Gastrocnemius medialis (tissue), 4 donors: ENCODE measurements at regions of chr21 and their contacts with region 1.

Region 1: GRCh38 chr21:38219049-38219628 is 37.7 kb upstream of the KCNJ15 start:
- DNase-seq: peak; percentile 17 to 33
- ATAC-seq: peak in 1 of 2 donors; percentile 66
- H3K4me3 ChIP-seq: no peak overlapping the region
- H3K27ac ChIP-seq: no peak overlapping the region
- H3K4me1 ChIP-seq: no peaks in the 10 kb centered on the region
- H3K27me3 ChIP-seq: no peaks in the 10 kb centered on the region
- CTCF ChIP-seq: peak; percentile 68 to 89 (median 75)
- POLR2A ChIP-seq: no peak

Region 2: DNA sequence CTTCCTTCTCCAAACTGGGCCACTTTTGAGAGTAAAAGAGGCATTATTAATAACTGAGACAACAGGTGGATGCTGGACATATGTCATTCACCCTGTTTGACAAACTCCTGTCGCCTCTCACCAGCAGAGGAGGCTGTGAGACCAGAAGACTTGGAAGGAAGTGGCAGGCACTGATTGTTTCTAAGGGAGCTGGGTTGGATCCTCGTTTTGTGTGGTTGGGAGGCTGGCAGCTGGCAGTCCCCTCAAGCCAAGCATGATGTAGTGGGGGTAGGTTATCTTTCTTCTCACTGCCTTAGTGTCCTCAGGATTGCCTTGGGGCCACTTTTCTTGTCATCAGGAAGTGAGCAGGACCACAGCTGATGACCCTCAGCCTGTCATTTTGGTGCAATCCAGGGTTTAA is 48.9 kb before region 1 on chr21:
- in situ Hi-C with region 1: no loop called
- intact Hi-C with region 1: loop called (anchors 10 kb)
- DNase-seq: no peak
- ATAC-seq: no peak
- H3K4me3 ChIP-seq: no peak overlapping the region
- H3K27ac ChIP-seq: no peak overlapping the region
- H3K4me1 ChIP-seq: no peaks in the 10 kb centered on the region
- H3K27me3 ChIP-seq: no peaks in the 10 kb centered on the region
- CTCF ChIP-seq: peak in 1 of 5 experiments; percentile 27
- POLR2A ChIP-seq: no peak